ENCODE measurements at regions of chr5 and their contacts with region 1.

Region 1: GRCh38 chr5:98928873-98929696 is at the start of gene CHD1:
- DNase-seq: peak; percentile 98
- ATAC-seq: peak; percentile 62
- H3K4me3 ChIP-seq: peak within 1 kb of the TSS; percentile 92 to 99 (median 97)
- H3K4me3 Mint-ChIP-seq: peak within 1 kb of the TSS; percentile 98
- H3K27ac ChIP-seq: peak within 1 kb of the TSS; percentile 99 to 100
- H3K27ac Mint-ChIP-seq: peak within 1 kb of the TSS; percentile 100
- H3K4me1 ChIP-seq: peaks cover 39 to 49% of the 10 kb centered on the region in 2 donors
- H3K4me1 Mint-ChIP-seq: peaks cover 66% of the 10 kb centered on the region
- H3K27me3 ChIP-seq: no peaks in the 10 kb centered on the region
- H3K27me3 Mint-ChIP-seq: no peaks in the 10 kb centered on the region
- CTCF ChIP-seq: no peak
- total RNA-seq, gene CHD1: 91.4 and 96.1 TPM in 2 replicates

Region 2: DNA sequence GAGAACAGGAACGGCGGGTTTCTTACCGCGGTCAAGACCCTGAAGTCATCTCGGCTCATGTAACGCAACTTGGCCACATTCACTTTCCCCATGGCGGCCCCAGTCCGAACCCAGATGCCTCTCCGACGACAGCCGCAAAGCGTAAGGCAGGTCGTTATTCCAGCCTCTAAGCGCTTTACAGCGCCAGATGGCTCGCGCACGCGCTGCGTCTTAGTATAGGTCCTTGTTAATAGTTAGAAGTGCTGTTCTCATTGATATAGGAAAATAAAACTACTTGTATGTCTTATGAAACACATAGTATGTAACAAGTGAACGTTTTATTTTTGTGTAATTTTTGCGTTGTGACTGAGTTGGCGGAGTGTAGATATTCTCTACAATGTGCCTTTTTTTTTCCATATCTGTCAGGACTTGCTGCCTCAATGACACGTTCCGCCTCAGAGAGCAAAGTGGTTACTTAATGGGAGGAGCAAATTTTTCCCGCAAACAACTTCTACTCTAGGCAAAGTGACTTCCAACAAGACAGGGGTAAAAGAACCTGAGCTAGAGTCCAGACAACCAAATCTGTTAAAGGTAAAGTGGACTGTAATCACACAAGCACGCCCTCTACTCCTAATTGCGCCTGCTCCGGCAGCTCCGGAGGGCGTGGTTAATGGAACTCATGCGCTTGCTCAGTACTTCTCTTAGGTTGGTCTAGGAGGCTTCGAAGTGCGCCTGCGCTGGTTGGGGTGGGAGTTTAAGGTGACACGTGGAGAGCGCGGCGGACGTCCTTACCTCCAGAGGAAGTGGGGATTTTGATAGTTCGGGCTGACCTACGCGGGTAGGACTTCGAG is 1745.8 kb before region 1 on chr5 and contains the start of gene RIOK2:
- CTCF ChIA-PET with region 1: no interaction called
- POLR2A ChIA-PET with region 1: no interaction called
- intact Hi-C with region 1: loop called (anchors 1 kb)
- DNase-seq: peak; percentile 93
- ATAC-seq: peak; percentile 87
- H3K4me3 ChIP-seq: peak within 1 kb of the TSS; percentile 68 to 96 (median 88)
- H3K4me3 Mint-ChIP-seq: peak within 1 kb of the TSS; percentile 97
- H3K27ac ChIP-seq: peak within 1 kb of the TSS; percentile 91 to 99
- H3K27ac Mint-ChIP-seq: peak within 1 kb of the TSS; percentile 100
- H3K4me1 ChIP-seq: peaks cover 12 to 15% of the 10 kb centered on the region in 2 donors
- H3K4me1 Mint-ChIP-seq: peaks cover 33% of the 10 kb centered on the region
- H3K27me3 ChIP-seq: no peaks in the 10 kb centered on the region
- H3K27me3 Mint-ChIP-seq: no peaks in the 10 kb centered on the region
- CTCF ChIP-seq: no peak
- total RNA-seq, gene RIOK2: 32.8 and 37.2 TPM in 2 replicates

Region 3: DNA sequence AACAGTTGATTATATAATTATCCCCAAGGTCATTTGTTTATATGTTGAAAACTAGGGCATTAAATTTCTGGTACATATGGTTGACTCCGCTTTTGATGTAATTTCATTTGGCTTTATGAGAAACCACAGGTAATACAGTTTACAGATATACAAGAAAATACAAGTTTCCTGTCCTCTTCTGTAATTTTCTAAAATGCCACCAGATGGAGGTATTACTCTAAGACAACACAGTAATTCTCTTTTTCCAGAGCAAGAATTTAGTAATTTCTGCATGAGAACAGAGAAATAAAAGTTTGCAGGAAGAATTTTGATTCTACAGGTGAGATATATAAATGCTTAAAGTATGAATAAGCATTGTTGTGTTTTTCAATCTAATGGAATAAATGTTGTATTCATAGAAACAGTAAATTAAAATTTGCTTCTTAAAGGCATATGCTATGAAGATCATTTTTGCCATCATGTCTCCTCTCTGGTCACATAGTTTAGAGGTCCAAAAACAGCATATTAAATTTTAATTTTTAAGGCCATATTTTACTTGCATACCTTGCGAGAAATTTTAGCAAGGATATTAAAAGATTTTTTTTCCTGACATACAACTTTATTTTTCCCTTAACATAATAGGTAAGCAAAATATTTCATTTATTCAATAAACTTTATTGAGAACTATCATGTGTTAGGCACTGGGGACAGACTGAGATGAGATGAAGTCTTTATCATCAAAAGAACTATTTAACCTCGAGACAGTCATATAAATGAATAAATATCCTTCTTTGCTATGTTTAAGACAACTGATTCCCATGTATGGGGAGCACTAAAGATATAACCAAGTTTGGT is 23.0 kb before region 1 on chr5:
- CTCF ChIA-PET with region 1: interaction called, 12 read pairs
- POLR2A ChIA-PET with region 1: no interaction called
- intact Hi-C with region 1: loop called (anchors 1 kb)
- DNase-seq: peak; percentile 72
- ATAC-seq: peak; percentile 36
- H3K4me3 ChIP-seq: no peak overlapping the region
- H3K4me3 Mint-ChIP-seq: no peak overlapping the region
- H3K27ac ChIP-seq: no peak overlapping the region
- H3K27ac Mint-ChIP-seq: no peak overlapping the region
- H3K4me1 ChIP-seq: peaks cover 5 to 12% of the 10 kb centered on the region in 2 donors
- H3K4me1 Mint-ChIP-seq: peaks cover 31% of the 10 kb centered on the region
- H3K27me3 ChIP-seq: no peaks in the 10 kb centered on the region
- H3K27me3 Mint-ChIP-seq: no peaks in the 10 kb centered on the region
- CTCF ChIP-seq: peak; percentile 92

Region 4: DNA sequence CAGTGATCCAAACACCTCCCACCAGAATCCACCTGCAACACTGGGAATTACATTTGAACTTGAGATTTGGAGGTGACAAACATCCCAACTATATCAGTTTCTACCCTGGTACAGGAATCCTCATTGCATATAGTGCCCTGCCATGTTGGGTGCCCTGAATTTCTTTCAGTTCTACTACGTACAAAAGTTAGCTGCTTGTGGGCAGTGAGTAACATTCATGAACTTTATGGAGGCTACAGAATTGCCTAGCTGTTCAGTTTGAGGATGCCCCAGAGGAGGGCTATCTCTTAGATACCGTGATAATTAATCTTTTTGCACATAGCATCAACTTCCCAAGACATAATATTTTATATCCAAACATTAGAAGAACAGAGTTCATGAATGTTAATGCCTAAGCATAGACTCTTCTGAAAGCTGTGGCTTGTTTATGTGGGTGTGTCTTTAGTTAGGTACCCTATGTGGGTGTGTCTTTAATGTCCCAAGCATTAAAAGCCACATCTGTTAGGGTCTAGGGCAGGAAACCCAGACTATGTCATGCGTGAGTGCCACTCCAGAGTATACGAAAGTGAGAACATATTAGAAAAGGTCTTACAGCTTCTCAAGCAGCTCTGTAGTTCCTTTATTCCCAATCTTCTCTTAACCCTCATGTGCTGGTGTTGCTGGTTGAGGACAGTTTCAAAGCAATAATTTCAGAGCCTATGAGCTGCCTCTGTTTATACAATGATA is 46.8 kb after region 1 on chr5:
- CTCF ChIA-PET with region 1: no interaction called
- POLR2A ChIA-PET with region 1: interaction called, 5 read pairs
- intact Hi-C with region 1: loop called (anchors 5 kb)
- DNase-seq: peak; percentile 62
- ATAC-seq: peak; percentile 93
- H3K4me3 ChIP-seq: no peak overlapping the region
- H3K4me3 Mint-ChIP-seq: peak overlapping the region; percentile 48
- H3K27ac ChIP-seq: no peak overlapping the region
- H3K27ac Mint-ChIP-seq: peak overlapping the region; percentile 26
- H3K4me1 ChIP-seq: peaks cover 19 to 20% of the 10 kb centered on the region in 2 donors
- H3K4me1 Mint-ChIP-seq: peaks cover 22% of the 10 kb centered on the region
- H3K27me3 ChIP-seq: no peaks in the 10 kb centered on the region
- H3K27me3 Mint-ChIP-seq: no peaks in the 10 kb centered on the region
- CTCF ChIP-seq: no peak

Region 5: GRCh38 chr5:99032234-99033013 is 103.3 kb after region 1 on chr5:
- CTCF ChIA-PET with region 1: interaction called, 32 read pairs
- POLR2A ChIA-PET with region 1: interaction called, 22 read pairs
- intact Hi-C with region 1: loop called (anchors 1 kb)
- DNase-seq: peak; percentile 73
- ATAC-seq: peak; percentile 56
- H3K4me3 ChIP-seq: peak overlapping the region in 2 of 5 experiments; percentile 38 to 60
- H3K4me3 Mint-ChIP-seq: peak overlapping the region; percentile 92
- H3K27ac ChIP-seq: peak overlapping the region; percentile 60 to 82
- H3K27ac Mint-ChIP-seq: peak overlapping the region; percentile 93
- H3K4me1 ChIP-seq: peaks cover 52 to 54% of the 10 kb centered on the region in 2 donors
- H3K4me1 Mint-ChIP-seq: peaks cover 80% of the 10 kb centered on the region
- H3K27me3 ChIP-seq: no peaks in the 10 kb centered on the region
- H3K27me3 Mint-ChIP-seq: no peaks in the 10 kb centered on the region
- CTCF ChIP-seq: peak; percentile 42

Region 6: DNA sequence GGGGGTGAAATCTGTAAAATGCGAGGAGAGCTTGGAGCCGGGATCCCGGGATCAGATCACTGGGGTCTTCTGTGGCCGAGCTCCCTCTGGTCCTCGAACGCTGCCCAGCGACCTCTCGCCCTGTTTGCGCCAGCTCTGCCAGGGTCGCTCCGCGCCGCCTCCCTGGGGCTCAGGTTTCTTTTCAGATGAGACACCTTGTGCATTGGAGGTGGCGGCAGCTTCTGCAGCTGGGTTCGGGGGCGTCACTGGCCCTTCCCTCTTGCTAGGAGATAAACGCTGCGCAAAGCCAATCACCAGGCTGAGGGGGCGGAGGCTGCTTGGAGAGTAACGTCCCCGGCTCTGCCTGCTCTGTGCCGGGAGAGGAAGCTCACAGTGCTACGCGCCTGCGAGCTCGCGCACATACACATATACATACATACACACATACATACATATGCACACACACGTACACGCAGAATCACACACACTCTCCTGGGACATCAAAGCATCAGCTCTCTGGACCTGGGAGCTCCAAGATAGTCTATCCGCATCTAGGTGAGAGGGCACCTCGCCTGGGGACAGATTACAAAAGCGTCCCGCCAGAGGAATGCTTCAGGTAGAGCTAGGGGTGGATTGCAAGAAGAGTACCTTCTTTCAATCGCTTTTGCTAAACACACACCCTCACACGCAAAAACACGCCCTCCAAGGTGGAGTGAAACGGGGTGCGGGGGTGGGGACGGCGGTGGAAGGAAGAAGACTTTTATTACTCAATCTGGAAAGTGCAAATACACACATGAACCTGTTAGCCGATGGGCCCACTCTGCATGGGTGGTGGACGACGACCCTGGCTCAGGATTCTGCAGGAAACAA is 1974.2 kb after region 1 on chr5 and contains the start of gene ST8SIA4:
- CTCF ChIA-PET with region 1: interaction called, 3 read pairs
- POLR2A ChIA-PET with region 1: no interaction called
- intact Hi-C with region 1: loop called (anchors 1 kb)
- DNase-seq: peak; percentile 95
- ATAC-seq: peak; percentile 75
- H3K4me3 ChIP-seq: peak within 1 kb of the TSS; percentile 82 to 100 (median 97)
- H3K4me3 Mint-ChIP-seq: peak within 1 kb of the TSS; percentile 89
- H3K27ac ChIP-seq: peak within 1 kb of the TSS; percentile 90 to 95
- H3K27ac Mint-ChIP-seq: peak within 1 kb of the TSS; percentile 96
- H3K4me1 ChIP-seq: peaks cover 27 to 38% of the 10 kb centered on the region in 2 donors
- H3K4me1 Mint-ChIP-seq: peaks cover 46% of the 10 kb centered on the region
- H3K27me3 ChIP-seq: no peaks in the 10 kb centered on the region
- H3K27me3 Mint-ChIP-seq: no peaks in the 10 kb centered on the region
- CTCF ChIP-seq: no peak
- total RNA-seq, gene ST8SIA4: 42.6 and 49.3 TPM in 2 replicates